Naive thymus-derived CD4-positive, alpha-beta T cell (primary cell): ENCODE measurements at regions of chr6 and their contacts with region 1.

Region 1: GRCh38 chr6:28080631-28081485 is 490 bp downstream of the ZNF165 start:
- DNase-seq: peak; percentile 89 to 94 (median 93)
- ATAC-seq: peak; percentile 85
- H3K4me3 ChIP-seq: peak overlapping the region; percentile 99
- H3K4me3 Mint-ChIP-seq: peak overlapping the region; percentile 87 to 99 (median 98)
- H3K27ac ChIP-seq: peak overlapping the region; percentile 97
- H3K27ac Mint-ChIP-seq: peak overlapping the region; percentile 84 to 99 (median 98)
- H3K4me1 ChIP-seq: peaks cover 6 to 7% of the 10 kb centered on the region in 2 donors
- H3K4me1 Mint-ChIP-seq: peaks cover 12 to 27% (median 16%) of the 10 kb centered on the region in 7 donors
- H3K27me3 ChIP-seq: no peaks in the 10 kb centered on the region
- H3K27me3 Mint-ChIP-seq: peaks cover 0 to 3% (median 0%) of the 10 kb centered on the region in 5 donors

Region 2: GRCh38 chr6:27472617-27473400 is 608.0 kb before region 1 on chr6 and contains the start of gene ZNF184:
- CTCF ChIA-PET with region 1: no interaction called
- POLR2A ChIA-PET with region 1: no interaction called
- intact Hi-C with region 1: loop called in 1 of 2 experiments (anchors 1 kb)
- DNase-seq: peak; percentile 74 to 88 (median 86)
- ATAC-seq: peak; percentile 88
- H3K4me3 ChIP-seq: peak within 1 kb of the TSS; percentile 85
- H3K4me3 Mint-ChIP-seq: peak within 1 kb of the TSS; percentile 85 to 98 (median 97)
- H3K27ac ChIP-seq: peak within 1 kb of the TSS; percentile 93
- H3K27ac Mint-ChIP-seq: peak within 1 kb of the TSS; percentile 90 to 99 (median 96)
- H3K4me1 ChIP-seq: peaks cover 13 to 23% of the 10 kb centered on the region in 2 donors
- H3K4me1 Mint-ChIP-seq: peaks cover 40 to 55% (median 52%) of the 10 kb centered on the region in 7 donors
- H3K27me3 ChIP-seq: no peaks in the 10 kb centered on the region
- H3K27me3 Mint-ChIP-seq: peaks cover 0 to 9% (median 0%) of the 10 kb centered on the region in 5 donors
- total RNA-seq, gene ZNF184: 9.6 to 13.7 (median 12.3) TPM

Region 3: GRCh38 chr6:27553123-27553904 is 527.5 kb before region 1 on chr6:
- CTCF ChIA-PET with region 1: no interaction called
- POLR2A ChIA-PET with region 1: no interaction called
- intact Hi-C with region 1: no loop called
- DNase-seq: no peak
- ATAC-seq: no peak
- H3K4me3 ChIP-seq: no peak overlapping the region
- H3K4me3 Mint-ChIP-seq: peak overlapping the region in 3 of 10 donors; percentile 6 to 59 (median 49)
- H3K27ac ChIP-seq: no peak overlapping the region
- H3K27ac Mint-ChIP-seq: peak overlapping the region in 2 of 9 donors; percentile 13 to 68
- H3K4me1 ChIP-seq: no peaks in the 10 kb centered on the region
- H3K4me1 Mint-ChIP-seq: peaks cover 3 to 20% (median 4%) of the 10 kb centered on the region in 7 donors
- H3K27me3 ChIP-seq: peaks cover 0 to 10% of the 10 kb centered on the region in 2 donors
- H3K27me3 Mint-ChIP-seq: peaks cover 76 to 91% (median 87%) of the 10 kb centered on the region in 5 donors

Region 4: DNA sequence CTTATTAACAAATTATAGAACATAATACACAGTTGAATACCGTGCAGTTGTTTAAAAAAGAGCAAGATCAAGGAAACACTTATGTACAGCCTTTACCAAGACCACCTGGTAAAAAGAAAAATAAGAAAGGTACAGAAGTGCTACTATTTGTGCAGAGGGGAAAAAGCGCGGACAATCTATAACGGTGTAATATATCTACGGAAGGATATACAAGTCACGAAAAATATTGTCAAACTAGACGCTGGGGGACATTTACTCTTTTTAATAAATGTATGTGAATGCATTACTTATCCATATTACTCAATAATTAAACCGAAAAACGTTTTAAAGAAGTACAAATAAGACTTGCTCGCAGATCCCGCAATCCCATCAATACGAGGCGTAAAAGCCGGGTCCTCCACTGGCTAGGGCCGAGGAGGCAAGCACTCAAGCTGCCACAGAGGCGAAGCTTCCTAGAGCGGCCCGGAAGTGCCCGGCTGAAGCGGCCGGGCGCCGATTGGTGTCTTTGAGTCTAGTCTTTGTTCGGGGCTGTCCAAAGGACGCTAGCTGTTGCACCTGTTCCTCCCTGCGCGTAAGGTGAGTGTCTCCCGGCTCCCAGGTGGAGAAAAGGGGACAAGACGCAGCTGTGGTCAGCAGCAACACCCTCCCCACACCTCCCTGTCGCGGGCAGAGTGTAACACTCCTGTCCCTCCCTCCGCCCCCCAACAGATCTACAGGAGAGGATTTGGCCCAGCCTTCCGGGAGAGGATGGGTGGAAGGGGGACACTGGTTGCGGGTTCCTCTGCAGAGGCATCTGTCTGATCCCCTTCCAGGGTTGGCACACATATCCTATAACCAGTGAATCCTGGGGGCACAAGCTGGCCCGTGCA is 43.5 kb after region 1 on chr6 and contains the start of gene ZSCAN16:
- CTCF ChIA-PET with region 1: no interaction called
- POLR2A ChIA-PET with region 1: interaction called, 4 read pairs
- intact Hi-C with region 1: loop called (anchors 1 kb)
- DNase-seq: peak; percentile 43 to 72 (median 59)
- ATAC-seq: peak; percentile 86
- H3K4me3 ChIP-seq: peak within 1 kb of the TSS; percentile 86
- H3K4me3 Mint-ChIP-seq: peak within 1 kb of the TSS; percentile 80 to 98 (median 95)
- H3K27ac ChIP-seq: peak within 1 kb of the TSS; percentile 93
- H3K27ac Mint-ChIP-seq: peak within 1 kb of the TSS; percentile 83 to 99 (median 96)
- H3K4me1 ChIP-seq: peaks cover 12 to 16% of the 10 kb centered on the region in 2 donors
- H3K4me1 Mint-ChIP-seq: peaks cover 35 to 54% (median 48%) of the 10 kb centered on the region in 7 donors
- H3K27me3 ChIP-seq: no peaks in the 10 kb centered on the region
- H3K27me3 Mint-ChIP-seq: no peaks in the 10 kb centered on the region
- total RNA-seq, gene ZSCAN16: 6.4 to 13.9 (median 7.6) TPM

Region 5: GRCh38 chr6:28335564-28336283 is 254.9 kb after region 1 on chr6 and contains the start of gene ZSCAN31:
- CTCF ChIA-PET with region 1: no interaction called
- POLR2A ChIA-PET with region 1: no interaction called
- intact Hi-C with region 1: loop called in 1 of 2 experiments (anchors 1 kb)
- DNase-seq: peak; percentile 43 to 87 (median 76)
- ATAC-seq: peak; percentile 95
- H3K4me3 ChIP-seq: peak within 1 kb of the TSS; percentile 97
- H3K4me3 Mint-ChIP-seq: peak within 1 kb of the TSS in 1 of 10 donors; percentile 58
- H3K27ac ChIP-seq: peak within 1 kb of the TSS; percentile 92
- H3K27ac Mint-ChIP-seq: peak within 1 kb of the TSS in 1 of 9 donors; percentile 47
- H3K4me1 ChIP-seq: peaks cover 9 to 10% of the 10 kb centered on the region in 2 donors
- H3K4me1 Mint-ChIP-seq: peaks cover 0 to 16% (median 9%) of the 10 kb centered on the region in 7 donors
- H3K27me3 ChIP-seq: no peaks in the 10 kb centered on the region
- H3K27me3 Mint-ChIP-seq: peaks cover 0 to 3% (median 0%) of the 10 kb centered on the region in 5 donors
- total RNA-seq, gene ZSCAN31: 0.93 to 2.4 (median 1.2) TPM

Region 6: GRCh38 chr6:28443112-28443773 is 362.4 kb after region 1 on chr6 and contains the start of gene ZSCAN23:
- CTCF ChIA-PET with region 1: no interaction called
- POLR2A ChIA-PET with region 1: no interaction called
- intact Hi-C with region 1: loop called (anchors 2 to 5 kb)
- DNase-seq: peak; percentile 59 to 93 (median 88)
- ATAC-seq: peak; percentile 96
- H3K4me3 ChIP-seq: peak within 1 kb of the TSS; percentile 76
- H3K4me3 Mint-ChIP-seq: peak within 1 kb of the TSS; percentile 86 to 98 (median 96)
- H3K27ac ChIP-seq: peak within 1 kb of the TSS; percentile 60
- H3K27ac Mint-ChIP-seq: peak within 1 kb of the TSS; percentile 76 to 97 (median 93)
- H3K4me1 ChIP-seq: peaks cover 13 to 16% of the 10 kb centered on the region in 2 donors
- H3K4me1 Mint-ChIP-seq: peaks cover 15 to 38% (median 32%) of the 10 kb centered on the region in 7 donors
- H3K27me3 ChIP-seq: peaks cover 0 to 6% of the 10 kb centered on the region in 2 donors
- H3K27me3 Mint-ChIP-seq: peaks cover 9 to 36% (median 30%) of the 10 kb centered on the region in 5 donors
- total RNA-seq, gene ZSCAN23: 1.4 to 3.4 (median 2.4) TPM

Region 7: DNA sequence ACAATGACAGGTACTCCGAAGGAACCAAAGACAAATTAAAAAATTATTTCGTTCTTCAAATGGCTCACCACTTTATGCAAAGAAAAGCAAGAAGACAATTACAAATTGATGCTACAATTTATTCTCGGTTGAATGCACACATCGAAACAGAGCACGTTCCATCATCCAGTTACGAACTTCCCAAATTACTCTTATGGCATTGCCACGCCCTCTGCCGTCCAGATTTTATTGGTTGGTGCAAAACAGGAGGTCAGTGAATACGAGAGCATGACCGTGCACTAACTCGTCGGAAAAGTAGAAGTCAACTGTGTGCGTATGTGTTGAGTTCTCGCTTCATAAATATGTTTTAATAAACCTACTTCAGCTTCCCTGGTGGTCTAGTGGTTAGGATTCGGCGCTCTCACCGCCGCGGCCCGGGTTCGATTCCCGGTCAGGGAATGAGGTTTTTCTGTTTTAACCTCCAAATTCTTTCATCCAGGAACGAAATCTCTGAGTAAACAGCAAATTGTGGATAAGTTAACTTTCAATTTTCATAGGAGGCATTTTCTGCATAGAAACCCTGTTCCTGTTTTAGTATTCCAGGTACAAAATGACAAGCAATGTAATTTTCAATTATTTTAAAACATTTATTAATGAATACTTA is 901.1 kb after region 1 on chr6:
- CTCF ChIA-PET with region 1: no interaction called
- POLR2A ChIA-PET with region 1: no interaction called
- intact Hi-C with region 1: loop called in 1 of 2 experiments (anchors 10 kb)
- DNase-seq: peak; percentile 48 to 89 (median 86)
- ATAC-seq: peak; percentile 81
- H3K4me3 ChIP-seq: peak overlapping the region; percentile 99
- H3K4me3 Mint-ChIP-seq: peak overlapping the region; percentile 85 to 100 (median 92)
- H3K27ac ChIP-seq: peak overlapping the region; percentile 47
- H3K27ac Mint-ChIP-seq: peak overlapping the region; percentile 87 to 100 (median 99)
- H3K4me1 ChIP-seq: peaks cover 7 to 18% of the 10 kb centered on the region in 2 donors
- H3K4me1 Mint-ChIP-seq: peaks cover 30 to 80% (median 66%) of the 10 kb centered on the region in 7 donors
- H3K27me3 ChIP-seq: no peaks in the 10 kb centered on the region
- H3K27me3 Mint-ChIP-seq: peaks cover 14 to 61% (median 36%) of the 10 kb centered on the region in 5 donors